Naive thymus-derived CD4-positive, alpha-beta T cell (primary cell): ENCODE measurements at regions of chr7 and their contacts with region 1.

Region 1: DNA sequence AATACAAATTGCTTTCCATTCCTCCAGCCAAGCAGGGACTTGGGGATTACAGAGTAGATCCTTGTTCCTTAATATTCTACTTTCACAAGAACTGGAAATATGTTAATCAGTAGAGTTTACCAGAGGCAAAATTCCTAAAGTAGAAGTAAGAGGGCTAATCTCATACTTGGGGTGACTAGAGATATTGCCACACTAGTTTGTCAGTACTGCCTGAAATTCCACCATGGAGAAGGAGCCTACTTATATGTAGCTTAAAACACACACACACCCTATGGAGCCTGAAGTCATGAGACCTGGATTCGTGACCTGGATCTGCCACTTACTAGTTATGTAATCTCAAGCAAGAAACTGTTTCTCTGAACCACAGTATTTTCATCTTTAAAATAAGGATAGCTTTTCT is 33.9 kb downstream of the STRIP2 start:
- DNase-seq: no peak
- ATAC-seq: no peak
- H3K4me3 ChIP-seq: no peak overlapping the region
- H3K4me3 Mint-ChIP-seq: no peak overlapping the region
- H3K27ac ChIP-seq: no peak overlapping the region
- H3K27ac Mint-ChIP-seq: peak overlapping the region in 1 of 9 donors; percentile 13
- H3K4me1 ChIP-seq: no peaks in the 10 kb centered on the region
- H3K4me1 Mint-ChIP-seq: peaks cover 0 to 12% (median 0%) of the 10 kb centered on the region in 7 donors
- H3K27me3 ChIP-seq: no peaks in the 10 kb centered on the region
- H3K27me3 Mint-ChIP-seq: no peaks in the 10 kb centered on the region

Region 2: DNA sequence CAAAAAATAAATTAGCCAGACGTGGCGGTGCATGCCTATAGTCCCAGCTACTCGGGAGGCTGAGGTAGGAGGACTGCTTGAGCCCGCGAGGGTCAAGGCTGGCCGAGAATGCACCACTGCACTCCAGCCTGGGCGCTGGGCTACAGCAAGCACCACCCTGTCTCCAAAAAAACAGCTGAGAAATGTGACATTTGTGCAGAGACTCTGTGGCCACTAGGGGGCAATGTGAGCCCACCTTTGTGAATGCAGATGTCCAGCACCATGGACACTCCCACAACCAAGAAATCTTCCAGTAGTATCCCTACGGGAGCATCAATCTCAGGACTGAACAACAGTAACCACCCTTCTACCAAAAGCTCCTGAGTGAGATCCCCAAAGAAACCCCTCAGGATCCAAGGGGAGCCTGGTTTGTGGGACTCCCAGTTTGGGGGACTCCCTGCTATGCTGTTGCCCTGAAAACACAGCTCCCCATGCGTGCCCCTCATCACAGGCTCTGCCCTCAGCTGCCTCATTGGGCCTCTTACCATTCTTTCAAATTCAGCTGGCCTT is 249.5 kb before region 1 on chr7:
- CTCF ChIA-PET with region 1: interaction called, 10 read pairs
- POLR2A ChIA-PET with region 1: no interaction called
- intact Hi-C with region 1: loop called (anchors 1 kb)
- DNase-seq: peak; percentile 58 to 80 (median 73)
- ATAC-seq: peak; percentile 93
- H3K4me3 ChIP-seq: no peak overlapping the region
- H3K4me3 Mint-ChIP-seq: peak overlapping the region in 1 of 10 donors; percentile 32
- H3K27ac ChIP-seq: no peak overlapping the region
- H3K27ac Mint-ChIP-seq: peak overlapping the region in 3 of 9 donors; percentile 51 to 87 (median 52)
- H3K4me1 ChIP-seq: peaks cover 0 to 3% of the 10 kb centered on the region in 2 donors
- H3K4me1 Mint-ChIP-seq: peaks cover 11 to 20% (median 16%) of the 10 kb centered on the region in 7 donors
- H3K27me3 ChIP-seq: no peaks in the 10 kb centered on the region
- H3K27me3 Mint-ChIP-seq: peaks cover 0 to 8% (median 0%) of the 10 kb centered on the region in 5 donors

Region 3: DNA sequence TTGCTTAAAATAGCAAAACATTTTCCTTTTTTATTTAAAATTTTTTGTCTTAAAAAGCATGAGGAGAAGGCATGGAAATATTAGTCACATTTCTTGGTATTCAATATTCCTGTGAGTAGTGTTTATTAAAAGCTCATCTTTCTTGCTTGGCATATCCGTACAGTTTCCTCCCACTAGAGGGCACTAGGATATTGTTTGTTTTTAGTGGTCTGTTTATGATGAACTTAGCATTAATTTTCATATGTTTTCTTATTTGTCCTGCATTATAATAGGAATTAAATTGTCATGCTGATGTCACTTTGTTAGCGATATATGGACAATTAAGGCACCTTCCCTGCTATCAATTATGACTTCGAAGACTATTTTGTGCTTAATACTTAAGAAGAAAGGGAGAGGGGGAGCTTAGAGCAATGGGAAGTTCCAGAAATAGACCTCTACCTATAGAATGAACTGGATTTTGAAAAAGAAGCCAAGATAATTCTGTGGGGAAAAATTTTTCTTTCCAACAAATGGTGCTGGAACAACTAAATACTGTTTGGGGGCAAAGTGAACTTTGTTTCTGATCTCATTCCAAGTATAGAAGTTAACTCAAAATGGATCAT is 124.9 kb before region 1 on chr7:
- CTCF ChIA-PET with region 1: interaction called, 3 read pairs
- POLR2A ChIA-PET with region 1: interaction called, 3 read pairs
- intact Hi-C with region 1: loop called (anchors 1 kb)
- DNase-seq: peak in 7 of 9 donors; percentile 7 to 37 (median 22)
- ATAC-seq: peak; percentile 61
- H3K4me3 ChIP-seq: no peak overlapping the region
- H3K4me3 Mint-ChIP-seq: no peak overlapping the region
- H3K27ac ChIP-seq: no peak overlapping the region
- H3K27ac Mint-ChIP-seq: no peak overlapping the region
- H3K4me1 ChIP-seq: no peaks in the 10 kb centered on the region
- H3K4me1 Mint-ChIP-seq: peaks cover 6 to 35% (median 19%) of the 10 kb centered on the region in 7 donors
- H3K27me3 ChIP-seq: no peaks in the 10 kb centered on the region
- H3K27me3 Mint-ChIP-seq: no peaks in the 10 kb centered on the region

Region 4: GRCh38 chr7:129401967-129402860 is 65.9 kb before region 1 on chr7:
- CTCF ChIA-PET with region 1: no interaction called
- POLR2A ChIA-PET with region 1: no interaction called
- intact Hi-C with region 1: loop called in 1 of 2 experiments (anchors 1 kb)
- DNase-seq: no peak
- ATAC-seq: no peak
- H3K4me3 ChIP-seq: no peak overlapping the region
- H3K4me3 Mint-ChIP-seq: no peak overlapping the region
- H3K27ac ChIP-seq: no peak overlapping the region
- H3K27ac Mint-ChIP-seq: peak overlapping the region in 1 of 9 donors; percentile 0
- H3K4me1 ChIP-seq: no peaks in the 10 kb centered on the region
- H3K4me1 Mint-ChIP-seq: peaks cover 0 to 16% (median 0%) of the 10 kb centered on the region in 7 donors
- H3K27me3 ChIP-seq: no peaks in the 10 kb centered on the region
- H3K27me3 Mint-ChIP-seq: no peaks in the 10 kb centered on the region

Region 5: DNA sequence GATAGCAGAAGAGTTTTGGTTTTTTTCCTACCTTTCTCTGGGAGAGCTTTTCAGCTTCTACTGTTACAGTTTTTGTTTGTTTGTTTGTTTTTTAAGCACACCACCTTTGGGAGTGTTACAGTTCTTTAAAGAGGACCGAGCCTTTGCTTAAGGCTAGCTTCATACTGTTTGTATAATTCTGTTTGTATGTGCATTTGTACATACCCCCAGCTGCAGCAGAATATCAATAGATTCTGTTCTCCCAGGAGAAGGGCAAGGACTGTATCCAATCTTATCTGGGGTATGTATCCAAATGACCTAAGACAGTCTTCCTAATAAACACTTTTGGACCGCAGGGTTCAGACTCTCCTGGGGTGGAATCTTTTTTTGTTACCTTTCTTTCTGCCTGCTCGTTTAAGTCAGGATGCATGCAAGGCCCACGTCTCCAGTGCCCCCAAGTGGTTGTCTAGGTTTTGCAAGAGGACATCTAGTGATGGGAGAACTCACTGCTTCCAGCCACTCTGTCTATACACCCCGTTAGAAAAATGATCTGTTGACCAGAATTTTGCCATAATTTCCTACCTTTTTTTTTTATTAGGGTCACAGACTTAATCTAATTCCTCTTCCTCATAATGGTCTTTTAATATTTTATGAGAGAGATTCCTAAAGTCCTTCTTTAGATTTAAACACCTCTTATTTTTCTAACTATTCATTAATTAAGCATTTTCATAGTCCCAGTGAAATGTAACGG is 167.4 kb after region 1 on chr7:
- CTCF ChIA-PET with region 1: interaction called, 3 read pairs
- POLR2A ChIA-PET with region 1: no interaction called
- intact Hi-C with region 1: loop called in 1 of 2 experiments (anchors 1 kb)
- DNase-seq: peak; percentile 20 to 73 (median 64)
- ATAC-seq: peak; percentile 97
- H3K4me3 ChIP-seq: no peak overlapping the region
- H3K4me3 Mint-ChIP-seq: peak overlapping the region in 1 of 10 donors; percentile 29
- H3K27ac ChIP-seq: peak overlapping the region; percentile 18
- H3K27ac Mint-ChIP-seq: peak overlapping the region in 8 of 9 donors; percentile 2 to 85 (median 42)
- H3K4me1 ChIP-seq: peaks cover 0 to 3% of the 10 kb centered on the region in 2 donors
- H3K4me1 Mint-ChIP-seq: peaks cover 16 to 73% (median 51%) of the 10 kb centered on the region in 7 donors
- H3K27me3 ChIP-seq: no peaks in the 10 kb centered on the region
- H3K27me3 Mint-ChIP-seq: no peaks in the 10 kb centered on the region